Mammary epithelial cell (primary cell): ENCODE measurements at regions of chr7 and their contacts with region 1.

Region 1: GRCh38 chr7:13990984-13991790 is 1.7 kb upstream of the ETV1 start:
- DNase-seq: peak; percentile 98
- H3K4me3 ChIP-seq: peak overlapping the region; percentile 81 to 90 (median 87)
- H3K27ac ChIP-seq: peak overlapping the region; percentile 94
- H3K4me1 ChIP-seq: peaks cover 19% of the 10 kb centered on the region
- H3K27me3 ChIP-seq: no peaks in the 10 kb centered on the region
- CTCF ChIP-seq: no peak

Region 2: DNA sequence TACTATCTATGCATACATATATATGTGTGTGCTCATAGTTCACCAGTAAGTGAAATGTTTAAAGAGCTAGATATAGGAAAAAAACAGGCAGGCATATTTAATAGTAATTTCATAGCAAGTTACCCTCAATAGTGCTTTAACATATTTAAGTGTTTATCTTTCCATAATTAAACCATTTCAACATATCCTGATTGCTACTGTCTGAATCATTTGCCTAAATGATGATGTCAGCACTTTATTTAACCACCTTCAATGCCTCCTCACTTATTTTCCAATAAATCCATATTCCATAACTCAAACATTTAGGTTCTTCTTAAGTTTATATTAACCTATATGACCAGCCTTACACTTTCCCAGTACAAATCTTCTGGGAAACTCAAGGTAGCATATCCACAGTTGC is 702.7 kb before region 1 on chr7:
- CTCF ChIA-PET with region 1: no interaction called
- dilution Hi-C with region 1: no loop called
- in situ Hi-C with region 1: no loop called
- intact Hi-C with region 1: loop called (anchors 5 kb)
- DNase-seq: no peak
- H3K4me3 ChIP-seq: no peak overlapping the region
- H3K27ac ChIP-seq: no peak overlapping the region
- H3K4me1 ChIP-seq: no peaks in the 10 kb centered on the region
- H3K27me3 ChIP-seq: no peaks in the 10 kb centered on the region
- CTCF ChIP-seq: no peak

Region 3: GRCh38 chr7:13850185-13850752 is 140.9 kb before region 1 on chr7:
- CTCF ChIA-PET with region 1: interaction called, 3 read pairs
- dilution Hi-C with region 1: no loop called
- in situ Hi-C with region 1: no loop called
- intact Hi-C with region 1: loop called (anchors 2 kb)
- DNase-seq: peak; percentile 98
- H3K4me3 ChIP-seq: no peak overlapping the region
- H3K27ac ChIP-seq: peak overlapping the region; percentile 61
- H3K4me1 ChIP-seq: peaks cover 31% of the 10 kb centered on the region
- H3K27me3 ChIP-seq: no peaks in the 10 kb centered on the region
- CTCF ChIP-seq: no peak

Region 4: DNA sequence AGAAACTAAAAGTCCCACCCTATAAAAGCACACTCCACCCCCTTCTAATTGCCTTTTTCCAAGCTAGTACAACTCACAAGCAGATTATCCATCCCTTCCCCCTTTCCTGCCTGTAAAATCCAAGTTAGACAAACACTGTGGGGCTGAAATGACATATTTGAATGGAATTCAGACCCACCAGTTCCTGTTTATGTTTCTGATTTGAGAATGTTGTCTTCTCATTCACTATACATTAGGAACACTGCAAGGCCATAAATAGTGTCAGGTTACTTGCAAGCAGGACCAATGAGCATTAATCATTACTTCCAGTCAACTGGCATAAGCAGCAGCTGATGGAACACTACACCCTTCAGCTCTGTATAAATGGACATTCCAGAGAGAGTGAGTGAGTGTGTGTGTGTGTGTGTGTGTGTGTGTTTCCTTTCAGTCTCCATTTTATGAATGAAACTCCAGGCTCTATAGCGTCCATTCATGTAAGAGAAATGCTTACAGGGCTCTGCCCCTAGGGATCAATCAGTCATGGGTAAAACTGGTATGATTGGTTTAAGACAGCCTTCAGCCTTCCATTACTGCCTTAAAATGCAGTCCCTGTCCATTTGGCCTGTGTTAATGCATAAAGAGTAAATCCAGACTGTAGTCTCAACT is 71.0 kb before region 1 on chr7:
- CTCF ChIA-PET with region 1: interaction called, 5 read pairs
- dilution Hi-C with region 1: no loop called
- in situ Hi-C with region 1: no loop called
- intact Hi-C with region 1: loop called (anchors 2 kb)
- DNase-seq: peak; percentile 100
- H3K4me3 ChIP-seq: peak overlapping the region in 2 of 3 experiments; percentile 28 to 29
- H3K27ac ChIP-seq: peak overlapping the region; percentile 91
- H3K4me1 ChIP-seq: peaks cover 9% of the 10 kb centered on the region
- H3K27me3 ChIP-seq: no peaks in the 10 kb centered on the region
- CTCF ChIP-seq: no peak

Region 5: DNA sequence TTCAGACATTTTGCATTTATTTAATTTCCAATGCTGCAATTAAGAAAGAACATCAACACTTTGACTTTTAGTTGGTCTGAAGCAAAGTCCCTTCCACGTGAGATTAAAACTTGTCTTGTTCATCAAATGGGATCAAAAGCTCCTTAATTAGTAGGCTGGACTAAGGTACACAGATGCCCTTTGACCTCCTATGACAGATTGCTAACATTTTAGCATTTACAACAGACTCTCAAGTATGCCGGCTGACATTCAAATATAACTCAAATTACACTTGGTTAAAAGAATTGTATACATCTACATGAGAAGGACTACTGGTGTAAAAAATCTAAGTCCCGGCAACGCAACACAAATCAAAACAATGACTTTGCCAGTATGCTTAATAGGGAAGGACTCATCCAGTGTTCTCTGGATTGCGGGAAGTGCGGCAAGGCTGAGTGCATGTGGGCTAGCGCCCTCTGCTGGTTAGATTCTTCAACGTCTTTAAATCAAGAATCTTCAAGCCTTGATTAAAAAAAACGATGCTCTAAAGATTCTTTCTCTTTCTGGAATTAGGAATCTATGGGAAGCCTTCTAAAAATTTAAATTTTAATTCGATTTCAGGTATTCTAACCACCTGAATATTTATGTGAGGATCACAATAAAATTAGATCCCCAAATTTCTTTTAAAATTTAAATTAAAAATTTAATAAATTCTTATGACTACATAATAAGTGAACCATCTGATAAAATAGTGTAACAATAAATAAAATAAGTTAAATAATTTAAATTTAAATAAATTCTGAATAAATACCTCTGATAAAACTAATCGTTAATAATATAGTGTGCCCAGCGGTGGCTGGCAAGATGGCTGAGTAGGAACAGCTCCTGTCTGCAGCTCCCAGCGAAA is 466.6 kb after region 1 on chr7:
- CTCF ChIA-PET with region 1: no interaction called
- dilution Hi-C with region 1: no loop called
- in situ Hi-C with region 1: no loop called
- intact Hi-C with region 1: loop called (anchors 1 kb)
- DNase-seq: peak; percentile 60
- H3K4me3 ChIP-seq: no peak overlapping the region
- H3K27ac ChIP-seq: no peak overlapping the region
- H3K4me1 ChIP-seq: no peaks in the 10 kb centered on the region
- H3K27me3 ChIP-seq: no peaks in the 10 kb centered on the region
- CTCF ChIP-seq: peak; percentile 71 to 90